Sigmoid colon (tissue), 7 donors: ENCODE measurements at regions of chr6 and their contacts with region 1.

Region 1: DNA sequence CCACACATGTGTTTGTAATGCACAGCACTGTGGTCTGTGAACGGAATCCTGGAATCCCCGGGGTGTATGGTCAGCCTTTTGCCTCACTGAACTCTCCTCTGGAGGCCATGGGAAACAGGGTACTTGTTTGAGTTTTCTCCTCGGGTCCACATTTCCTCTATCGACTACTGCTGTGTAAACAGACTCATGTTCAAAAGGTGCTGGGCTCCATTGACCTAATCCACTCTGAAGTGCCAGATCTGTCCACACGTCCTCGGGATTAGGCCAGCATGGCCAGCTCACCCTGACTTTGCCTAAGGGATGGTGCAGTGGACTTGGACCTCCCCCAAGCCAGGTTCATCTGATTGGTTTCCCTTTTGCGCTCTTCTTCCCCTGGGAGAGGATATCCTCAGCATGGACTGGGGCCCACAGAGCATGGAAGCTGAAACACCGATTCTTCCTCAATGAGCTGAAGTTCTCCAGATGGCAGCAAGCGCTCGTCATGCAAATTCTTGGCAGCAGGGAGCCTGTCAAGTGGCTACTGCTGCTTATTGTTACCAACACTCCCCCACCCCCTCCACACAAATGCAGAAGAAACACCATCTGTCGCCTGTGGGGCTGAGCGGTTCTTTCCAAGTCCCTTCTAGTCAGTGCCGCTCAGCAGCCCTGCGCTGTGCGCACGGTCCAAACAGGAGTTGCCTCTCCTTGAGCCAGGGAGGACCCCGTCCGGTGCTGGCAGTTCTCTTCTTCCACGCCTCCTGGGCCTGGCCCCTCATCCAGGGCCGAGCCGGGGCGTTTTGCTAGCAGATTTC is 292.6 kb upstream of the MARCKS start:
- DNase-seq: peak; percentile 97
- H3K4me3 ChIP-seq: peak overlapping the region; percentile 19 to 44 (median 42)
- H3K27ac ChIP-seq: peak overlapping the region; percentile 76 to 91 (median 88)
- H3K4me1 ChIP-seq: peaks cover 2 to 21% (median 16%) of the 10 kb centered on the region in 4 donors
- H3K27me3 ChIP-seq: no peaks in the 10 kb centered on the region
- CTCF ChIP-seq: peak in 3 of 4 experiments; percentile 19 to 23 (median 20)
- EP300 ChIP-seq: peak; percentile 85 to 99 (median 94)
- POLR2A ChIP-seq: peak; percentile 20 to 21

Region 2: GRCh38 chr6:113414511-113414910 is 150.1 kb before region 1 on chr6:
- intact Hi-C with region 1: loop called (anchors 10 kb)
- DNase-seq: no peak
- H3K4me3 ChIP-seq: no peak overlapping the region
- H3K27ac ChIP-seq: peak overlapping the region in 1 of 4 donors; percentile 28
- H3K4me1 ChIP-seq: peaks cover 0 to 8% (median 3%) of the 10 kb centered on the region in 4 donors
- H3K27me3 ChIP-seq: no peaks in the 10 kb centered on the region
- CTCF ChIP-seq: peak; percentile 18 to 59 (median 30)
- EP300 ChIP-seq: no peak
- POLR2A ChIP-seq: no peak

Region 3: GRCh38 chr6:113457198-113457597 is 107.4 kb before region 1 on chr6:
- intact Hi-C with region 1: loop called (anchors 10 kb)
- DNase-seq: peak; percentile 64
- H3K4me3 ChIP-seq: no peak overlapping the region
- H3K27ac ChIP-seq: no peak overlapping the region
- H3K4me1 ChIP-seq: peaks cover 0 to 9% (median 4%) of the 10 kb centered on the region in 4 donors
- H3K27me3 ChIP-seq: no peaks in the 10 kb centered on the region
- CTCF ChIP-seq: no peak
- EP300 ChIP-seq: no peak
- POLR2A ChIP-seq: no peak

Region 4: GRCh38 chr6:113591896-113592827 is 27.6 kb after region 1 on chr6:
- intact Hi-C with region 1: loop called (anchors 1 kb)
- DNase-seq: no peak
- H3K4me3 ChIP-seq: no peak overlapping the region
- H3K27ac ChIP-seq: peak overlapping the region in 1 of 4 donors; percentile 2
- H3K4me1 ChIP-seq: peaks cover 0 to 31% (median 28%) of the 10 kb centered on the region in 4 donors
- H3K27me3 ChIP-seq: no peaks in the 10 kb centered on the region
- CTCF ChIP-seq: no peak
- EP300 ChIP-seq: no peak
- POLR2A ChIP-seq: no peak

Region 5: GRCh38 chr6:113825781-113826180 is 261.2 kb after region 1 on chr6:
- intact Hi-C with region 1: loop called (anchors 10 kb)
- DNase-seq: peak; percentile 94
- H3K4me3 ChIP-seq: no peak overlapping the region
- H3K27ac ChIP-seq: peak overlapping the region in 3 of 4 donors; percentile 72 to 79 (median 75)
- H3K4me1 ChIP-seq: peaks cover 0 to 37% (median 33%) of the 10 kb centered on the region in 4 donors
- H3K27me3 ChIP-seq: no peaks in the 10 kb centered on the region
- CTCF ChIP-seq: no peak
- EP300 ChIP-seq: no peak
- POLR2A ChIP-seq: no peak